Activated CD4-positive, alpha-beta T cell treated with anti-CD3 and anti-CD28 coated beads for 36 hours (primary cell): ENCODE measurements at regions of chr3 and their contacts with region 1.

Region 1: GRCh38 chr3:35012210-35012609 is 627.1 kb upstream of the ARPP21 start:
- DNase-seq: no peak
- ATAC-seq: no peak
- H3K4me3 Mint-ChIP-seq: no peak overlapping the region
- H3K27ac Mint-ChIP-seq: no peak overlapping the region
- H3K4me1 Mint-ChIP-seq: no peaks in the 10 kb centered on the region
- H3K27me3 Mint-ChIP-seq: peaks cover 2% of the 10 kb centered on the region

Region 2: DNA sequence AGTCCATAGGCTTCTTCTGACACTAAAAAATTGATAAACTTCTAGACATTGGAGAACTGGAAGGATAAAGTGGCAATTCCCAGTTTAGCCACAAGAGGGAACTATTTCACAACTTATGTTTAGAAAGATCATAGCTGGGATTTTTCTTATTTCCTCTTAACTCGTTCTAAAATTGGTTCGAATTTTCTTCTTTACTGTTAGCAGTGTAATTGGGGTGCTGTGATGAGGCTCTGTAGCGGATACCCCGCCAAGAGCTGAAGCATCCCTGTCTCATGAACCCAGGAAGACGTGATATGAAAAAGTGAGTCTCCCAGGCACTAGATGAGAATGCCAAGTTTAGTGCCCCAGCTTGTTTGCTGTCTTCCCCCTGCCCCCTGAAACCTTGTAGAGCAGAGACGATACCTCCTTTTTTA is 1128.7 kb before region 1 on chr3:
- CTCF ChIA-PET with region 1: no interaction called
- POLR2A ChIA-PET with region 1: no interaction called
- intact Hi-C with region 1: no loop called
- DNase-seq: no peak
- ATAC-seq: peak; percentile 19
- H3K4me3 Mint-ChIP-seq: no peak overlapping the region
- H3K27ac Mint-ChIP-seq: no peak overlapping the region
- H3K4me1 Mint-ChIP-seq: peaks cover 4% of the 10 kb centered on the region
- H3K27me3 Mint-ChIP-seq: no peaks in the 10 kb centered on the region

Region 3: GRCh38 chr3:35505181-35505580 is 493.0 kb after region 1 on chr3:
- CTCF ChIA-PET with region 1: no interaction called
- POLR2A ChIA-PET with region 1: no interaction called
- intact Hi-C with region 1: loop called in 1 of 2 experiments (anchors 5 kb)
- DNase-seq: no peak
- ATAC-seq: no peak
- H3K4me3 Mint-ChIP-seq: no peak overlapping the region
- H3K27ac Mint-ChIP-seq: no peak overlapping the region
- H3K4me1 Mint-ChIP-seq: no peaks in the 10 kb centered on the region
- H3K27me3 Mint-ChIP-seq: no peaks in the 10 kb centered on the region